ENCODE measurements at regions of chr10 and their contacts with region 1.

Region 1: DNA sequence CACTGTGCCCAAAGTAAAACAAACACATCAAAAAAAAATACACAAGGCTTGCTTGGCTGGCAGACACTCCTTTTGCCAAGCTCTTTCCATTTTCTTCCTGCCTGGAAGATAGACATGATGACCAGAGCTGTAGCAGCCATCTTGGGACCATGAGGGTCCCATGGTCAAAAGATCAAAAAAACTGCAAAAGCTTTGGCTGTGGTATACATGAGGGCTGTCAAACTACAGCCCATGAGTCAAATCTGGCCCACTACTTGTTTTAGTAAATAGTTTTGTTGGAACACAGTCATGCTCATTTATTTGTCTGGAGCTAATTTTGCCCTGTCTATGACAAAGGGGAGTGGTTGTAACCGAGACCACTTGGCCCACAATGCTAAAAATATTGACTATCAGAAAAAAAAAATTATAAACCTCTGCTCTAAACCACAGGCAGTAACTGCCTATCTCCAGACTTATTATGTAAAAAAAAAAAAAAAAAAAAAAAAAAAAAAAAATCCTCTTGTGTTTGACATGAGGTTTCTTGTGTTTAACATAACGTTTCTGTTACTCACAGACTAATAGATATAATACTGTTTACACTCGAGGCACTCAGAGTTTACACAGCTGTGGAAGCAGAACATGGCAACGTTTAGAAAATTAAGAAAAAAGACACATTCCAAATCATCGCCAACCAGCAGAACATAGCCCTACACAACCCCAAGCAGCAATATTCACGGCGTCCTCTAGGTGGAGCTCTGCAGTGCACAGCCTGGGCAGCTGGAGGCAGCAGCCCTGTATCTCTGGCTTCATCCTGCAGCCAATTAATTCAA is 36.9 kb downstream of the ASB13 start:
- DNase-seq: peak; percentile 32
- H3K4me3 ChIP-seq: no peak overlapping the region
- CTCF ChIP-seq: peak; percentile 79

Region 2: GRCh38 chr10:5094265-5095205 is 535.0 kb before region 1 on chr10 and contains the start of gene AKR1C3:
- in situ Hi-C with region 1: no loop called
- DNase-seq: peak; percentile 32
- H3K4me3 ChIP-seq: no peak within 1 kb of the TSS
- CTCF ChIP-seq: peak; percentile 44

Region 3: GRCh38 chr10:5575482-5576166 is 53.9 kb before region 1 on chr10:
- in situ Hi-C with region 1: no loop called
- DNase-seq: peak; percentile 49
- H3K4me3 ChIP-seq: no peak overlapping the region
- CTCF ChIP-seq: no peak

Region 4: GRCh38 chr10:5670662-5671375 is 41.3 kb after region 1 on chr10:
- in situ Hi-C with region 1: loop called (anchors 5 kb)
- DNase-seq: no peak
- H3K4me3 ChIP-seq: no peak overlapping the region
- CTCF ChIP-seq: no peak